HepG2 (cell line): ENCODE measurements at regions of chr6 and their contacts with region 1.

Region 1: GRCh38 chr6:11207199-11207968 is 25.1 kb downstream of the NEDD9 start:
- DNase-seq: peak; percentile 98
- ATAC-seq: peak; percentile 53
- H3K4me3 ChIP-seq: no peak overlapping the region
- H3K27ac ChIP-seq: peak overlapping the region; percentile 68
- H3K4me1 ChIP-seq: peaks cover 100% of the 10 kb centered on the region
- H3K27me3 ChIP-seq: no peaks in the 10 kb centered on the region
- CTCF ChIP-seq: no peak
- EP300 ChIP-seq: peak; percentile 78 to 88
- POLR2A ChIP-seq: no peak; a peak in 1 of 4 replicates
- RAD21 ChIP-seq: no peak

Region 2: DNA sequence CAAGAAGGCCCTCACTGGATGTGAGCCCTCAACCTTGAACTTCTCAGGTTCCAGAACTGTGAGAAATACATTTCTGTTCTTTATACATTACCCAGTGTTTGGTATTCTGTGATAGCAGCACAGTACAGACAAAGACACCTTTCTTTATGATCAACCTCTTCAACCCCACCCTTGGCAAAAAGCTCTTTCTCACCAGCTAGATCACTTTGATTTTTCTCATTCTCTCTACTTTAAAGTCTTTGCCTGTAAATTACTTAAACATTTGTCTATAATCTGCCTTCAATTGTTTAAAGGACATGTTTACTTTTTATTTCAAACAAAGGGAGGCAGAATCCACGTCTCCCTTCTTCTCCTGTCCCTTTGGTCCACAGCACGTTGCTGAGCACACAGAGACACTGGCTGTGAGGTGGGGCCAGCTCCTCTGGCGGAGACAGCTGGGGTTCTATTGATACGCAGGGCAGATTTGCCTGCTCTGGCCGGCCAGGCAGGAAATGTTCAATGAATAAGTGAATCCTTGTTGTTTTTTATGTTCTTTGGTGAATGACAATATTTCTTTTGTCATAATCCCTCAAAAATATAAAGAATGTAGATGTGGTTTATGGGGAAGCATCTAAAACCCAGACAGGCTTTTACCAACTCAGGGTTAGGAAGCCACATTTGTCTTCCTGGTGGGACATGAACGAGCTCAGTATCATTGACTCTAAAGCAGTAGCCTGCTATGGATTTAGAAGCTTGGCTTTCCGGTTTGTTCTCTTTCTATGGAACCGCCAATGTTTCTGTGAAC is 27.8 kb before region 1 on chr6:
- CTCF ChIA-PET with region 1: no interaction called
- POLR2A ChIA-PET with region 1: interaction called, 41 read pairs
- in situ Hi-C with region 1: no loop called
- intact Hi-C with region 1: no loop called
- DNase-seq: peak; percentile 79
- ATAC-seq: peak; percentile 77
- H3K4me3 ChIP-seq: no peak overlapping the region
- H3K27ac ChIP-seq: peak overlapping the region; percentile 11
- H3K4me1 ChIP-seq: peaks cover 40% of the 10 kb centered on the region
- H3K27me3 ChIP-seq: no peaks in the 10 kb centered on the region
- CTCF ChIP-seq: no peak
- EP300 ChIP-seq: 0 out of 4 replicates have a peak, but pooled peaks of 1 of the 2 experiments have one; percentile 29
- POLR2A ChIP-seq: no peak
- RAD21 ChIP-seq: no peak

Region 3: GRCh38 chr6:11188161-11188915 is 19.0 kb before region 1 on chr6:
- CTCF ChIA-PET with region 1: no interaction called
- POLR2A ChIA-PET with region 1: interaction called, 41 read pairs
- in situ Hi-C with region 1: no loop called
- intact Hi-C with region 1: no loop called
- DNase-seq: peak; percentile 57
- ATAC-seq: no peak
- H3K4me3 ChIP-seq: no peak overlapping the region
- H3K27ac ChIP-seq: peak overlapping the region; percentile 49
- H3K4me1 ChIP-seq: peaks cover 35% of the 10 kb centered on the region
- H3K27me3 ChIP-seq: no peaks in the 10 kb centered on the region
- CTCF ChIP-seq: no peak
- EP300 ChIP-seq: no peak; a peak in 1 of 4 replicates
- POLR2A ChIP-seq: no peak; a peak in 1 of 4 replicates
- RAD21 ChIP-seq: no peak

Region 4: DNA sequence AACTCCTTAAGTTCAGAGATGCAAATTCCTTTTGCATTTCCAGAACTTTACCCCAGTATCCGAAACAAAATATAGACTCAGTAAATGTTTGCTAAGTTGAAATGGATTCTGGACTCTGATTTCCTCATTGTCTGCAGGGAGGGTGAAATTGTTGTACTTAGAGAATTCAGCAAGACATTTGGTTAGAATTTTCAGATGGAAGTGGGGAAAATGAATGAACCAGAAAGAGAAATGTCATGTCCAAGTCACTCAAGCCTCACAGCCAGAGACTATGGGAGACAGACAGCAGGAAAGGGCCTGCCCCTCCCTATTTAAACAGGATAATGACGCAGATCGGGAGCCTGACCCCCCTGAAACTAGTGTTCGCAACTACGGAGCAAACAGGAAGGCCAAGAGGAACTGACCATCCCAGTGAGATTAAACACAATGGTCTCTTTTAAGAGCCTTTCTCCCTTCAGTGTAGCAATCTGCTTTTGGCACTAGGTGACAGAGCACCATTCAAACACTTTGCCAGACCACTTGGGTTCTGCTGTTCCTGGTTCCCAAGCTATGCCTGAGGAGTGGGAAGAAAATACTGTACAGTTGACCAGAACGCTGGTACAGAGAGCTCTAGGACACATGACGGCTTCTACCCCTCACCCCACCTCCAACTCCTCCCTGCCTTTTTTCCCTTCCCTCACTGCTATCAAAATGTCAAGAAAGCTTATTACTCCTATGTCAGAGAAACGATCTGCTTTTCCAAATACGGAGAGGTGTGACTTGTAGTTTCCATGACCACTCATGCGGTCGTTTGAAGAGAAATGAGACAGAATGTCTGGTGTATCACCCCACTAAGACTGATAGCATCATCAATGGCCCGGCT is 11.4 kb after region 1 on chr6:
- CTCF ChIA-PET with region 1: no interaction called
- POLR2A ChIA-PET with region 1: interaction called, 78 read pairs
- in situ Hi-C with region 1: no loop called
- intact Hi-C with region 1: loop called (anchors 1 kb)
- DNase-seq: peak; percentile 99
- ATAC-seq: peak; percentile 91
- H3K4me3 ChIP-seq: peak overlapping the region; percentile 13 to 54 (median 21)
- H3K27ac ChIP-seq: peak overlapping the region; percentile 85
- H3K4me1 ChIP-seq: peaks cover 100% of the 10 kb centered on the region
- H3K27me3 ChIP-seq: no peaks in the 10 kb centered on the region
- CTCF ChIP-seq: peak; percentile 46
- EP300 ChIP-seq: peak; percentile 86 to 89; a peak in 3 of 4 replicates
- POLR2A ChIP-seq: peak in 1 of 2 experiments; percentile 77; a peak in 3 of 4 replicates
- RAD21 ChIP-seq: peak; percentile 76

Region 5: GRCh38 chr6:11224252-11224965 is 17.0 kb after region 1 on chr6:
- CTCF ChIA-PET with region 1: no interaction called
- POLR2A ChIA-PET with region 1: interaction called, 85 read pairs
- in situ Hi-C with region 1: no loop called
- intact Hi-C with region 1: loop called (anchors 2 kb)
- DNase-seq: no peak
- ATAC-seq: no peak
- H3K4me3 ChIP-seq: peak overlapping the region; percentile 6 to 49 (median 25); a peak in 5 of 6 replicates
- H3K27ac ChIP-seq: peak overlapping the region; percentile 31
- H3K4me1 ChIP-seq: peaks cover 91% of the 10 kb centered on the region
- H3K27me3 ChIP-seq: no peaks in the 10 kb centered on the region; a peak in 1 of 5 replicates
- CTCF ChIP-seq: no peak
- EP300 ChIP-seq: no peak
- POLR2A ChIP-seq: peak; percentile 7 to 37; a peak in 3 of 4 replicates
- RAD21 ChIP-seq: no peak

Region 6: GRCh38 chr6:11288047-11288461 is 80.7 kb after region 1 on chr6:
- CTCF ChIA-PET with region 1: no interaction called
- POLR2A ChIA-PET with region 1: no interaction called
- in situ Hi-C with region 1: no loop called
- intact Hi-C with region 1: no loop called
- DNase-seq: no peak
- ATAC-seq: no peak
- H3K4me3 ChIP-seq: no peak overlapping the region
- H3K27ac ChIP-seq: no peak overlapping the region
- H3K4me1 ChIP-seq: peaks cover 20% of the 10 kb centered on the region
- H3K27me3 ChIP-seq: no peaks in the 10 kb centered on the region; a peak in 1 of 5 replicates
- CTCF ChIP-seq: no peak
- EP300 ChIP-seq: no peak
- POLR2A ChIP-seq: no peak
- RAD21 ChIP-seq: no peak

Region 7: DNA sequence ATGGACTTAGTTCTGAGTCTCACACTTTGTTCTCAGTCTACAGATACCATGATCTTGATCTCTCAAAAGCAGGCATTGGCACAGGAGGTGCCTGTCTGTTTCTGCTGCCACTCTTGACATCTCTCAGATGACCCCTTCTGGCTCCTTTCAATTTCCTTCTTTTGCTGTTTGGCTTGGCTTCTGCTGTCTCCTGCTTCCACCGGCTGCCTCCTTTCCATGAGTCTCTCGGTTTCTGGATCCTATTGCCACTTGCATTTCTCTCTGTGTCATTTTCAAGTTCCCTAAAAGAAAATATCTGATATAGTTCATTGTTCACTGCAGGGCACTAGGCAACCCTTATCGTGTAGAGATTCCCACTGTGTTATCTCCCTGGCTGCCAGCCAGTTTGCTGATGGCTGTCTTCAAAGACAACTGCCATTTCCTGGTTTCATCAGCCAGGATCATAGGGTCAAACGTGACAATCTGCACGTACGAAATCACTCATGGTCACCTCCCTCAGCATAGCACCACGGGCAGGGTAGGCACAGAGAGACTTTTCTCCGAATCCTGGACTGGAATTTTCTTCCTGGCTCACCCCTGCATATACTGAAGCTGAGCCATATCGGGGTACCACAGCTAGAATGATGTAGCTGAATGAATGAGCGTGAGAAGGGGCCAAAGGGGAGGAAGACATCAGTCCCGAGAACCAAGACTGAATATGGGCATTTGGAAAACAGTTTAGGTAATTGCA is 185.6 kb after region 1 on chr6:
- CTCF ChIA-PET with region 1: no interaction called
- POLR2A ChIA-PET with region 1: interaction called, 5 read pairs
- in situ Hi-C with region 1: no loop called
- intact Hi-C with region 1: loop called (anchors 1 kb)
- DNase-seq: peak; percentile 100
- ATAC-seq: peak; percentile 85
- H3K4me3 ChIP-seq: peak overlapping the region in 1 of 3 experiments; percentile 39; a peak in 2 of 6 replicates
- H3K27ac ChIP-seq: peak overlapping the region; percentile 98
- H3K4me1 ChIP-seq: peaks cover 97% of the 10 kb centered on the region
- H3K27me3 ChIP-seq: no peaks in the 10 kb centered on the region
- CTCF ChIP-seq: peak; percentile 17; the same call in 1 of the 2 replicates
- EP300 ChIP-seq: peak; percentile 89 to 100
- POLR2A ChIP-seq: peak; percentile 63 to 66; a peak in 3 of 4 replicates
- RAD21 ChIP-seq: no peak